ENCODE measurements at regions of chr6 and their contacts with region 1.

Region 1: GRCh38 chr6:133432021-133432989 is 191.1 kb downstream of the EYA4 start:
- DNase-seq: peak; percentile 41 to 77
- ATAC-seq: peak; percentile 82 to 85 (median 83)
- H3K4me3 ChIP-seq: peak overlapping the region; percentile 26
- H3K27ac ChIP-seq: peak overlapping the region; percentile 78
- H3K4me1 ChIP-seq: peaks cover 54% of the 10 kb centered on the region
- H3K27me3 ChIP-seq: no peaks in the 10 kb centered on the region
- CTCF ChIP-seq: no peak

Region 2: DNA sequence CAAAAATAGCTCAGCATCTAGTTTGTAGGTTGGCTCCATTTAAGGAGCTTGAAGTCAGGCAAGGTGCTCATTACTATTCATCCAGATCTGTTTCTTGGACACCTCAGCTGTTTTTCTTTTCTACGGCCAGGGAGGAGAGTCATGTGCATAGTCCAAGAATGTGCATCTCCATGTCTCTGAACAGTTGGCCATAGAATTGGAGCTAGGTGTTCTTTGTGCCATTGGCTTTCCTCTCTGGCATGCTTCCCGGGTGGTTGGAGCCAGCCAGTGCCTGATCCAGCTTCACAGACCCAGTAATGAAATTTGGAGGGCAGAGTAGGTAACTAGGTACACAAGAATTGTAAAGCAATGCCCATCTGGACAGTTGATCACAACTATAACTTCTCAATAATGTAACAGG is 169.5 kb before region 1 on chr6:
- intact Hi-C with region 1: no loop called
- DNase-seq: peak; percentile 22 to 77
- ATAC-seq: peak; percentile 80 to 86 (median 82)
- H3K4me3 ChIP-seq: no peak overlapping the region
- H3K27ac ChIP-seq: peak overlapping the region; percentile 50
- H3K4me1 ChIP-seq: peaks cover 51% of the 10 kb centered on the region
- H3K27me3 ChIP-seq: no peaks in the 10 kb centered on the region
- CTCF ChIP-seq: no peak

Region 3: DNA sequence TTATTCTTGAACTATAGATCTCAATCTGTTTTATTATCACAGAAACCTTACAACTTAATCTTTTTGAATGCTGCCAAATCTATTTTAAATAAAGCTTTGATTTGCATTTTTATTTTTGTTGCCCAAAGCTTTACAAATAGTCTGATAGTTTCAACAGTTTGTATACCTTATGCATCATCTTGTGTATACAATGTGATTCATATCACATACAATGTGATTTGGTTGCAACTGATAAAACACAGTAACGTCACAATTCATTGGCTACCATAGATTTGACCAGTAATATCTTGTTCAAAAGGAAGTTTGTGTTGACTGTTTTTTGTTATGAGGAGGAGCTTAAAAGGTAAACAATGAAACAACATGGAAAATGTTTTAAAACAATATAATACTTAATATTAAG is 80.3 kb before region 1 on chr6:
- intact Hi-C with region 1: no loop called
- DNase-seq: no peak
- ATAC-seq: no peak
- H3K4me3 ChIP-seq: no peak overlapping the region
- H3K27ac ChIP-seq: peak overlapping the region; percentile 65
- H3K4me1 ChIP-seq: peaks cover 45% of the 10 kb centered on the region
- H3K27me3 ChIP-seq: no peaks in the 10 kb centered on the region
- CTCF ChIP-seq: no peak

Region 4: GRCh38 chr6:133377219-133377618 is 55.1 kb before region 1 on chr6:
- intact Hi-C with region 1: loop called in 1 of 2 experiments (anchors 10 kb)
- DNase-seq: no peak
- ATAC-seq: peak; percentile 77 to 85 (median 83)
- H3K4me3 ChIP-seq: no peak overlapping the region
- H3K27ac ChIP-seq: peak overlapping the region; percentile 56
- H3K4me1 ChIP-seq: peaks cover 37% of the 10 kb centered on the region
- H3K27me3 ChIP-seq: no peaks in the 10 kb centered on the region
- CTCF ChIP-seq: no peak

Region 5: GRCh38 chr6:133396233-133396983 is 35.9 kb before region 1 on chr6:
- intact Hi-C with region 1: loop called (anchors 5 kb)
- DNase-seq: no peak
- ATAC-seq: peak; percentile 56 to 79 (median 73)
- H3K4me3 ChIP-seq: no peak overlapping the region
- H3K27ac ChIP-seq: peak overlapping the region; percentile 27
- H3K4me1 ChIP-seq: peaks cover 27% of the 10 kb centered on the region
- H3K27me3 ChIP-seq: no peaks in the 10 kb centered on the region
- CTCF ChIP-seq: no peak

Measured in psoas muscle (tissue), 8 donors.